Dorsolateral prefrontal cortex (tissue), 120 donors: ENCODE measurements at regions of chr6 and their contacts with region 1.

Region 1: GRCh38 chr6:87078983-87079616 is 15.8 kb downstream of the CGA start:
- DNase-seq: peak; percentile 36 to 74 (median 60)
- H3K4me3 ChIP-seq: no peak overlapping the region
- H3K27ac ChIP-seq: no peak overlapping the region
- H3K27me3 ChIP-seq: peaks cover 0 to 4% (median 0%) of the 10 kb centered on the region in 45 donors
- CTCF ChIP-seq: peak; percentile 45 to 88 (median 78)

Region 2: DNA sequence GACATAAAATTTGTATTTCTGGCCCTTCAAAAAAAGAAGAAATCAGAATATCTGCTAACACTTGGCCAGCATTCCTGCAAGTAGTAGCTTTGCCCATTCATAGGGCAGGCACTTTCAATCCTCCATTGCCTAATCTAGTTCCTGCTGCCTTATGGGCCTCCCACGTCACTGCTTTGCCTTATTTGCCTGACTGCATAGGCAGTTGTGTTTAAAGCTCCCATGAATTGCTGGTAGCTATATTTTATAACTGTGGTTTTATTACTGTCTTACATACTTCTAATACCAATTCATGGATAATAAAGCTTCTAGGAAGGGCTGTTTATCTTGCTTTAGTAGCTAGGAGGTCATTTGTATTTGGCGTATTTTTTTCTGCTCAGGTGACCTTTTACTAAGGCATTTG is 386.0 kb after region 1 on chr6:
- intact Hi-C with region 1: loop called in 1 of 2 experiments (anchors 10 kb)
- DNase-seq: no peak
- H3K4me3 ChIP-seq: no peak overlapping the region
- H3K27ac ChIP-seq: no peak overlapping the region
- H3K27me3 ChIP-seq: no peaks in the 10 kb centered on the region
- CTCF ChIP-seq: no peak